ENCODE measurements at regions of chr1 and their contacts with region 1.

Region 1: GRCh38 chr1:155934097-155934935 is at the start of gene KHDC4:
- DNase-seq: peak; percentile 99
- ATAC-seq: peak; percentile 92
- H3K4me3 ChIP-seq: peak within 1 kb of the TSS; percentile 99
- H3K27ac ChIP-seq: peak within 1 kb of the TSS; percentile 87
- H3K4me1 ChIP-seq: peaks cover 13% of the 10 kb centered on the region
- H3K27me3 ChIP-seq: no peaks in the 10 kb centered on the region
- CTCF ChIP-seq: 0 out of 6 replicates have a peak, but pooled peaks of 1 of the 3 experiments have one; percentile 15
- EP300 ChIP-seq: no peak
- POLR2A ChIP-seq: peak; percentile 100
- RAD21 ChIP-seq: 0 out of 2 replicates have a peak, but pooled peaks have one; percentile 8
- polyA plus RNA-seq, gene KHDC4: 11.7 to 15.1 TPM

Region 2: DNA sequence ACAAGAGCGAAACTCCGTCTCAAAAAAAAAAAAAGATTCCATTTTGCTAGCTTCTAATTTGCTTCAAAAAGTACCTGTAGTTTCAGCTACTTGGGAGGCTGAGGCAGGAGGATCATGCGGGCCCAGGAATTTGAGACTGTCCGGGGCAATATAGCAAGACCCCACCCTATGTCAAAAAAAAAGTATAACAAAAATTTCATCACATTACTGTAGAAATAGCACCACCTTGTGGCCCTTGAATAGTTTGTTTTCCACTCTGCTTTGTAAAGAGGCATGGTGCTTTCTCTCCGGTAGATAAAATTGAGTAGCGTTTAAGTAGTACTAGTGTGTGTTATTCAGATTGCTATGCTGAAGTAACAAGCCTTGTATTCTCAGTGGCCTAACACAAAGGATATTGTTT is 342.5 kb before region 1 on chr1:
- CTCF ChIA-PET with region 1: no interaction called
- POLR2A ChIA-PET with region 1: no interaction called
- RAD21 ChIA-PET with region 1: no interaction called
- SMC1A ChIA-PET with region 1: no interaction called
- in situ Hi-C with region 1: no loop called
- intact Hi-C with region 1: no loop called
- DNase-seq: peak; percentile 24
- ATAC-seq: peak; percentile 79
- H3K4me3 ChIP-seq: no peak overlapping the region
- H3K27ac ChIP-seq: no peak overlapping the region
- H3K4me1 ChIP-seq: no peaks in the 10 kb centered on the region
- H3K27me3 ChIP-seq: no peaks in the 10 kb centered on the region
- CTCF ChIP-seq: peak; percentile 43 to 60 (median 50); a peak in 5 of 6 replicates
- EP300 ChIP-seq: no peak
- POLR2A ChIP-seq: no peak
- RAD21 ChIP-seq: peak; percentile 72

Region 3: DNA sequence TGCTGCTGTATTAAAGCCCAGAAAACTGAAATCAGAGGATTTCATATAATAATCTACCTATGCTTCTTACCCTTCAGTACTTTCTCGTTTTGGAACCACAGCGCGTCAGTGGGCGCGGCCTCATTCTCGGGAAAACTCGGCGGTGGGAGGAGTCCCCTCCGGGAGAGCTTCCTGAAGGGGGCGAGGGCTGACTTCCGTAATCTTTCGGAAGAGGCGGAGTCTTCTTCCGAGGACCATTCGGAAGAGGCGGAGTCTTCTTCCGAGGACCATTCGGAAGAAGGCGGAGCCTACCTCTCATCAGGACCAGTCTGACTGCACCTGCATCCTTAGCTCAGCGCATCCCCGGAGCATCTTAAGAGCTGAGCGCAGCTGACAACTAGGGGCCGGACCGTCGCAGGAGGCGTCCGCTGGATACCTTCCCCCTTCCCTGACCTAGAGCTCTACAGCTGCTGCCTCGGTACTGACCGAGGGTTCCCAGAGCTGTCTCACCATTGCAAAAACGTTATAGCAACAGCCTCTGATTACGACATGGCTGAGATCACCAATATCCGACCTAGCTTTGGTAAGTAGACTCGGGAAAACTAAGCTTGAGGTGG is 75.0 kb before region 1 on chr1 and contains the start of gene SYT11:
- CTCF ChIA-PET with region 1: interaction called, 5 read pairs
- POLR2A ChIA-PET with region 1: interaction called, 11 read pairs
- RAD21 ChIA-PET with region 1: interaction called, 7 read pairs
- SMC1A ChIA-PET with region 1: interaction called, 13 read pairs
- in situ Hi-C with region 1: no loop called
- intact Hi-C with region 1: loop called (anchors 2 kb)
- DNase-seq: peak; percentile 91
- ATAC-seq: peak; percentile 80
- H3K4me3 ChIP-seq: peak within 1 kb of the TSS; percentile 83
- H3K27ac ChIP-seq: peak within 1 kb of the TSS; percentile 70
- H3K4me1 ChIP-seq: peaks cover 15% of the 10 kb centered on the region
- H3K27me3 ChIP-seq: no peaks in the 10 kb centered on the region
- CTCF ChIP-seq: no peak
- EP300 ChIP-seq: no peak
- POLR2A ChIP-seq: peak; percentile 43; the same call in 1 of the 2 replicates
- RAD21 ChIP-seq: no peak
- polyA plus RNA-seq, gene SYT11: 7.7 to 7.8 TPM

Region 4: GRCh38 chr1:155961937-155962336 is 27.6 kb after region 1 on chr1:
- CTCF ChIA-PET with region 1: interaction called, 21 read pairs
- POLR2A ChIA-PET with region 1: interaction called, 4 read pairs
- RAD21 ChIA-PET with region 1: interaction called, 8 read pairs
- SMC1A ChIA-PET with region 1: interaction called, 12 read pairs
- in situ Hi-C with region 1: no loop called
- intact Hi-C with region 1: no loop called
- DNase-seq: no peak
- ATAC-seq: 0 out of 3 replicates have a peak, but pooled peaks have one; percentile 5
- H3K4me3 ChIP-seq: no peak overlapping the region
- H3K27ac ChIP-seq: no peak overlapping the region; the same call in 1 of the 2 replicates
- H3K4me1 ChIP-seq: peaks cover 39% of the 10 kb centered on the region
- H3K27me3 ChIP-seq: no peaks in the 10 kb centered on the region
- CTCF ChIP-seq: peak in 1 of 3 experiments; percentile 9; a peak in 1 of 6 replicates
- EP300 ChIP-seq: no peak
- POLR2A ChIP-seq: peak; percentile 57; the same call in 1 of the 2 replicates
- RAD21 ChIP-seq: peak; percentile 39

Region 5: GRCh38 chr1:155989242-155990004 is 55.1 kb after region 1 on chr1:
- CTCF ChIA-PET with region 1: interaction called, 227 read pairs
- POLR2A ChIA-PET with region 1: interaction called, 273 read pairs
- RAD21 ChIA-PET with region 1: interaction called, 214 read pairs
- SMC1A ChIA-PET with region 1: interaction called, 229 read pairs
- in situ Hi-C with region 1: loop called (anchors 5 kb)
- intact Hi-C with region 1: loop called (anchors 1 kb)
- DNase-seq: no peak
- ATAC-seq: peak; percentile 97
- H3K4me3 ChIP-seq: no peak overlapping the region
- H3K27ac ChIP-seq: peak overlapping the region; percentile 40; the same call in 1 of the 2 replicates
- H3K4me1 ChIP-seq: peaks cover 17% of the 10 kb centered on the region
- H3K27me3 ChIP-seq: no peaks in the 10 kb centered on the region
- CTCF ChIP-seq: peak; percentile 96 to 99 (median 99)
- EP300 ChIP-seq: no peak
- POLR2A ChIP-seq: no peak
- RAD21 ChIP-seq: peak; percentile 100

Region 6: DNA sequence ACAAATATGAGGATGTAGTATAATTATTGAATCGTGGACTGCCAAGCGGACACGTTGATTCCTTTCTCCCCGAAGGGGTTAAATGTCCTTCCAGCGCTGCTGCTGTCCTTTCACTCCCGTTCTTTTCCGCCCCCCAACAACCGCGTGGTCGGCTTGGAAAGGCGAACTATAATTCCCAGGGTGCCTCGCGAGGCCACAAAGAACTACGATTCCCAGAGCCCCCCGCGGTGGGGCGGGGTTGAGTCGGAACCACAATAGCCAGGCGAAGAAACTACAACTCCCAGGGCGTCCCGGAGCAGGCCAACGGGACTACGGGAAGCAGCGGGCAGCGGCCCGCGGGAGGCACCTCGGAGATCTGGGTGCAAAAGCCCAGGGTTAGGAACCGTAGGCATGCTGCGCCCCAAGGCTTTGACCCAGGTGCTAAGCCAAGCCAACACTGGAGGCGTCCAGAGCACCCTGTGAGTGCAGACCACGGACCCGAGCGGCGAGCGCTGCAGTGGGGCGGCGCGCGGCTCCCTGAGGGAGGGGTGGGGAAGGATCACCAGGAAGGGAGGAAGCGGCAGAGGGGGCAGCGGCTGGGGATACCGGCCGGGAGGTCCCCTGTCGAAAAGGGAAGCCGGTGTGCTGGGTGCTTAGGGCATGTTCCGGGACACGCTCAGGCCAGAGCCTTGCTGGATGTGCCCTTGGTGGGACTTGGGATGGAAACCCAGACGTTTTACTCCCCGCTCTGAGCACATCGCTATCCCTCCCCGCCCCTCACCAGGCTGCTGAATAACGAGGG is 120.4 kb after region 1 on chr1 and contains the start of gene LAMTOR2:
- CTCF ChIA-PET with region 1: interaction called, 6 read pairs
- POLR2A ChIA-PET with region 1: interaction called, 3 read pairs
- RAD21 ChIA-PET with region 1: interaction called, 11 read pairs
- SMC1A ChIA-PET with region 1: interaction called, 7 read pairs
- in situ Hi-C with region 1: no loop called
- intact Hi-C with region 1: loop called (anchors 2 kb)
- DNase-seq: peak; percentile 83
- ATAC-seq: peak; percentile 84
- H3K4me3 ChIP-seq: peak within 1 kb of the TSS; percentile 93
- H3K27ac ChIP-seq: peak within 1 kb of the TSS; percentile 95
- H3K4me1 ChIP-seq: no peaks in the 10 kb centered on the region; the same call in 1 of the 2 replicates
- H3K27me3 ChIP-seq: no peaks in the 10 kb centered on the region
- CTCF ChIP-seq: no peak
- EP300 ChIP-seq: no peak
- POLR2A ChIP-seq: peak; percentile 73; the same call in 1 of the 2 replicates
- RAD21 ChIP-seq: no peak
- polyA plus RNA-seq, gene LAMTOR2: 225 to 264 TPM

Region 7: DNA sequence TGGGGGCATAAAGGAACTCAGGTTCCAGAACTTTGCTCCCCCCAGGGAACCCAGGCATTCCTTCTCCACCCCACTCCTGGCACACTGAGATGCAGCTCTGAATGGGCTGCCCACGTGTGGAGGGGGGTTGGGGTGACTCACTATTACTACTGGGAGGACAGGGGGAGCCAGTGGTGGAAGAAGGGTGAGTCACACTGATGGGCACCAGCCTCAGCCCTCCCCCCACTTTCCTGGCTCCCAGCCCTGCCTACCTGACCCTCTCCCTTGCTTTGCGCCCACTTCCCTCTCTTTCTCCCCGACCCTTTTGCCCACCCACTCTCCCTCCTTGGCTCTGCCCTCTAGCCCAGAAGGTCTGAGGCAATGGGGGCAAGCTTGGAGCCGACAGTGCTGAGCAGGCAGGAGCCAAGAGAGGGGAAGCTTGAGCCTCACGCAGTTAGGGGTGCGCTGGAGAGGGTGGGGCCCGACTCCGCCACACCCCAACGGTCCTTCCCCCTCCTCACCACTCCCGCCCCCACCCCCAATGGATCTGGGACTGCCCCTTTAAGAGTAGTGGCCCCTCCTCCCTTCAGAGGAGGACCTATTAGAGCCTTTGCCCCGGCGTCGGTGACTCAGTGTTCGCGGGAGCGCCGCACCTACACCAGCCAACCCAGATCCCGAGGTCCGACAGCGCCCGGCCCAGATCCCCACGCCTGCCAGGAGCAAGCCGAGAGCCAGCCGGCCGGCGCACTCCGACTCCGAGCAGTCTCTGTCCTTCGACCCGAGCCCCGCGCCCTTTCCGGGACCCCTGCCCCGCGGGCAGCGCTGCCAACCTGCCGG is 180.0 kb after region 1 on chr1 and contains the start of gene LMNA:
- CTCF ChIA-PET with region 1: no interaction called
- POLR2A ChIA-PET with region 1: interaction called, 10 read pairs
- RAD21 ChIA-PET with region 1: no interaction called
- SMC1A ChIA-PET with region 1: no interaction called
- in situ Hi-C with region 1: no loop called
- intact Hi-C with region 1: no loop called
- DNase-seq: peak; percentile 48
- ATAC-seq: peak; percentile 88
- H3K4me3 ChIP-seq: peak within 1 kb of the TSS; percentile 94
- H3K27ac ChIP-seq: peak within 1 kb of the TSS; percentile 53; the same call in 1 of the 2 replicates
- H3K4me1 ChIP-seq: peaks cover 12% of the 10 kb centered on the region
- H3K27me3 ChIP-seq: no peaks in the 10 kb centered on the region
- CTCF ChIP-seq: no peak
- EP300 ChIP-seq: no peak; a peak in 1 of 4 replicates
- POLR2A ChIP-seq: peak; percentile 82
- RAD21 ChIP-seq: no peak
- polyA plus RNA-seq, gene LMNA: 0.42 to 6.0 TPM

Measured in GM12878 (cell line).